HCT116 (cell line): ENCODE measurements at regions of chr1 and their contacts with region 1.

Region 1: DNA sequence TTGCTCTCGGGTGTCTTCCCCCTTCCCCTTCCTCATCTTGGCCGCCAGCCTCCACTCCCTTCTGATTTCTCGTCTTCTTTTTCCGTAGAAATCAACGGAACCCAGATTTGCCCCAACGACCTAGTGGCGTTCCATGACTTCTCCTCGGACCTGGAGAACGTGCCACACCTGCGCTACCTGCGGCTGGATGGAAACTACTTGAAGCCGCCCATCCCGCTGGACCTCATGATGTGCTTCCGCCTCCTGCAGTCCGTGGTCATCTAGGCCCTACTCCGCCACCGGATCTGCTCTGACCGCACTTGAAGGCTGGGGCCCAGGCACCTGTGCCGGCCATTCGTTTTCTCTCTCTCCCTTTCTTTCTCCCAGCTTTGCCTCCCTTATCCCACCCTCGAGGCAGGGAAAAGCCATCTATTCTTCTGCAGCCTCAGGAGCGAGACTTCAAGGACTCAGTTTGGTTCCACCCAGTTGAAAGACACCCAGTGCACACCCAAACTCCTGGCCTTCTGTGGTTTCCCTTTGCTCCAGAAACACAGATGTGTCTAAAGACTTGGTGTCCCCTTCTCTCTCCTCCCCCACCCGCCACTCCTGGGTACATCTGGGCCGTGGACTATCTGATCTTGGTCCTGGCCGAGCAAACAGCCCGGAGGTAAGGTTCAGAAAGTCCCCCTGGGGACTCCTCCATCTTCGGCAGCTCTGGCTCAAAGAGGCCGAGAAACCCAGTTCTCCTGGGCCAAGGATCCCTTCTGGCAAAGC is 7.2 kb upstream of the OPTC start:
- DNase-seq: no peak
- ATAC-seq: no peak
- H3K4me3 ChIP-seq: no peak overlapping the region; a peak in 1 of 4 replicates
- H3K27ac ChIP-seq: peak overlapping the region; percentile 50; the same call in 1 of the 2 replicates
- H3K4me1 ChIP-seq: peaks cover 4 to 12% of the 10 kb centered on the region in 2 experiments; a peak in 2 of 4 replicates
- H3K27me3 ChIP-seq: no peaks in the 10 kb centered on the region
- CTCF ChIP-seq: no peak
- POLR2A ChIP-seq: no peak
- RAD21 ChIP-seq: no peak

Region 2: GRCh38 chr1:203340112-203340804 is 146.5 kb before region 1 on chr1:
- CTCF ChIA-PET with region 1: interaction called, 23 read pairs
- POLR2A ChIA-PET with region 1: interaction called, 3 read pairs
- RAD21 ChIA-PET with region 1: interaction called, 3 to 5 read pairs
- intact Hi-C with region 1: loop called (anchors 1 kb)
- DNase-seq: peak; percentile 76
- ATAC-seq: peak; percentile 76
- H3K4me3 ChIP-seq: no peak overlapping the region
- H3K27ac ChIP-seq: no peak overlapping the region
- H3K4me1 ChIP-seq: peaks cover 0 to 6% of the 10 kb centered on the region in 2 experiments; a peak in 2 of 4 replicates
- H3K27me3 ChIP-seq: peaks cover 15% of the 10 kb centered on the region; the same call in 1 of the 2 replicates
- CTCF ChIP-seq: peak; percentile 88 to 96 (median 94)
- POLR2A ChIP-seq: no peak
- RAD21 ChIP-seq: peak; percentile 95

Region 3: GRCh38 chr1:203475012-203475981 is 11.5 kb before region 1 on chr1 and contains the start of gene PRELP:
- CTCF ChIA-PET with region 1: interaction called, 12 read pairs
- POLR2A ChIA-PET with region 1: no interaction called
- RAD21 ChIA-PET with region 1: no interaction called
- intact Hi-C with region 1: no loop called
- DNase-seq: no peak
- ATAC-seq: peak; percentile 75
- H3K4me3 ChIP-seq: no peak within 1 kb of the TSS
- H3K27ac ChIP-seq: no peak within 1 kb of the TSS
- H3K4me1 ChIP-seq: peaks cover under 1 to 5% of the 10 kb centered on the region in 2 experiments; a peak in 3 of 4 replicates
- H3K27me3 ChIP-seq: peaks cover 24% of the 10 kb centered on the region
- CTCF ChIP-seq: no peak
- POLR2A ChIP-seq: no peak
- RAD21 ChIP-seq: no peak
- total RNA-seq, gene PRELP: 0.10 TPM

Region 4: DNA sequence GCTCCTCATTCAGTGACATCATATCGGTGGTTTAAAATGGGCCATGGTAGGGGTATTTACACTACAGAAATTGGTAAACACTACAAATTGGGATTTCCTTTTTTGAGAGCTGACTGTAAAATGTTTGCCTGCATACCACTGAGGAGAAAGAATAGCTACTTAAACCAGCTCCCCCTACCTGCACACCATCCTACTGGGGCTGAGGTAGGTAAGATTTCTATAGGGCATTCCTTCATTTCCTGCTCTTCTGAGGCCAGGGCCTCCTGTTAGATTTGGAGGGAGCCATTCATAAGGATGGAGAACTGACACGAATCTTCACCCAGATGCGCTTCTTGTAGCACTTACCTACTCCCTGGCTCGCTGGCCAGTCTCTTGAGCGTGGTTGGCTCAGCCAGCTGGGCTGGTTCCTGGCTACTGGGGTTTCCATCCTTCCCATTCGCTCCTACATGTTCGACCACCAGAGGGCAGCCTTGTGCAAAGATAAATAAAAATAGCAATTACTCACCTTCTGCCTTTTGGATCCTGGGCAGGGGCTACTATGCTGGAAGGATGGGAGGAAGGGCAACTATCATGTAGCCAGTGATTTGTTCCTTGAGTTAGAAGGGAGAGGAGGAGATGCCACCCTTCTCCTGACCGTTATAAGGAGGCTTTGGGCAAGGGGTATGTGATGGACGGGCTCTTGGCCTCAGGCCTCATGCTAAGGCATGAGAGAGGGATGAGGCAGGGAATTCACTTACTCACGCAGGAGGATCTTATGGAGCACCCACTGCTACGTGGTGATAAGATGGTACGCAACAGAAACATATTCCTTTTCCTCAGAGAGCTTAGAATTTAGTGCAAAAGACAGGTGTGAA is 17.8 kb after region 1 on chr1:
- CTCF ChIA-PET with region 1: interaction called, 15 read pairs
- POLR2A ChIA-PET with region 1: interaction called, 4 read pairs
- RAD21 ChIA-PET with region 1: no interaction called
- intact Hi-C with region 1: no loop called
- DNase-seq: peak; percentile 70
- ATAC-seq: peak; percentile 98
- H3K4me3 ChIP-seq: no peak overlapping the region
- H3K27ac ChIP-seq: no peak overlapping the region
- H3K4me1 ChIP-seq: peaks cover 0 to 7% of the 10 kb centered on the region in 2 experiments; a peak in 1 of 4 replicates
- H3K27me3 ChIP-seq: peaks cover 13% of the 10 kb centered on the region; the same call in 1 of the 2 replicates
- CTCF ChIP-seq: peak; percentile 70 to 85 (median 83)
- POLR2A ChIP-seq: no peak
- RAD21 ChIP-seq: peak; percentile 86